Common myeloid progenitor, CD34-positive (primary cell): ENCODE measurements at regions of chr21 and their contacts with region 1.

Region 1: DNA sequence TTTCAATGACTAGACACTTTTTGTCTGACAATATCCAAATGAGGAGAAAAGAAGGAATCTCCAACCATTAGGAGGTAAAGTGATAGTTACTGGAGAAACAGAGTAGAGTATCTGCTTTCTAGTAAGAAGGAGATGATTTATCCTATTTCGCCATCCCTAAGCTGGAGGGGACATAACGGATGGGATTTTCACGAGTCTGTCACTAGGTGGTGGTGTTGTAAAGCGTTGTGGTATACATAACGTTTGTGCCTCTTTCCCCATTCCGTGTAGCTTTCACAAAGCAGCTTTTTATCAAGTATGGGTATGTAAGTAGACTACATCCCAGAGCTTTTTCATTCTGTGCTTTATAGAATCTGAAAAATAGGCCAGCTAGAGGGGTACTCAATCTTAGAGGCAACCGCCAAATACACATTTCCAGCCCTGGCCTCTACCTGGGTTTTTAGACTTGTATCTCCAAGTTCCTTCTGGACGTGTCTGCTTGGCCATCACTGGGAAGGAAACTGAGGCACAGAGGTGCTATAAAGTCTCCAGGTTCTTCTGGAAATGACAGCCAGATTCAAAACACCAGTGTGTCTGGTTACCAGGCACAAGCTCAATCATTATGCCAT is 33.3 kb upstream of the FAM3B start:
- DNase-seq: peak; percentile 81 to 90 (median 85)
- H3K4me3 ChIP-seq: no peak overlapping the region
- H3K27ac ChIP-seq: no peak overlapping the region
- H3K4me1 ChIP-seq: no peaks in the 10 kb centered on the region
- H3K27me3 ChIP-seq: peaks cover 3 to 14% (median 10%) of the 10 kb centered on the region in 5 experiments

Region 2: GRCh38 chr21:41269535-41269934 is 13.8 kb before region 1 on chr21:
- CTCF ChIA-PET with region 1: interaction called, 14 read pairs
- POLR2A ChIA-PET with region 1: no interaction called
- DNase-seq: no peak
- H3K4me3 ChIP-seq: no peak overlapping the region
- H3K27ac ChIP-seq: no peak overlapping the region
- H3K4me1 ChIP-seq: no peaks in the 10 kb centered on the region
- H3K27me3 ChIP-seq: no peaks in the 10 kb centered on the region

Region 3: GRCh38 chr21:41369105-41369919 is 86.0 kb after region 1 on chr21:
- CTCF ChIA-PET with region 1: interaction called, 16 read pairs
- POLR2A ChIA-PET with region 1: no interaction called
- DNase-seq: peak; percentile 51 to 70 (median 59)
- H3K4me3 ChIP-seq: peak overlapping the region in 6 of 7 experiments; percentile 9 to 80 (median 56)
- H3K27ac ChIP-seq: no peak overlapping the region
- H3K4me1 ChIP-seq: peaks cover 6 to 23% (median 10%) of the 10 kb centered on the region in 4 experiments
- H3K27me3 ChIP-seq: peaks cover 0 to 2% (median 0%) of the 10 kb centered on the region in 5 experiments

Region 4: DNA sequence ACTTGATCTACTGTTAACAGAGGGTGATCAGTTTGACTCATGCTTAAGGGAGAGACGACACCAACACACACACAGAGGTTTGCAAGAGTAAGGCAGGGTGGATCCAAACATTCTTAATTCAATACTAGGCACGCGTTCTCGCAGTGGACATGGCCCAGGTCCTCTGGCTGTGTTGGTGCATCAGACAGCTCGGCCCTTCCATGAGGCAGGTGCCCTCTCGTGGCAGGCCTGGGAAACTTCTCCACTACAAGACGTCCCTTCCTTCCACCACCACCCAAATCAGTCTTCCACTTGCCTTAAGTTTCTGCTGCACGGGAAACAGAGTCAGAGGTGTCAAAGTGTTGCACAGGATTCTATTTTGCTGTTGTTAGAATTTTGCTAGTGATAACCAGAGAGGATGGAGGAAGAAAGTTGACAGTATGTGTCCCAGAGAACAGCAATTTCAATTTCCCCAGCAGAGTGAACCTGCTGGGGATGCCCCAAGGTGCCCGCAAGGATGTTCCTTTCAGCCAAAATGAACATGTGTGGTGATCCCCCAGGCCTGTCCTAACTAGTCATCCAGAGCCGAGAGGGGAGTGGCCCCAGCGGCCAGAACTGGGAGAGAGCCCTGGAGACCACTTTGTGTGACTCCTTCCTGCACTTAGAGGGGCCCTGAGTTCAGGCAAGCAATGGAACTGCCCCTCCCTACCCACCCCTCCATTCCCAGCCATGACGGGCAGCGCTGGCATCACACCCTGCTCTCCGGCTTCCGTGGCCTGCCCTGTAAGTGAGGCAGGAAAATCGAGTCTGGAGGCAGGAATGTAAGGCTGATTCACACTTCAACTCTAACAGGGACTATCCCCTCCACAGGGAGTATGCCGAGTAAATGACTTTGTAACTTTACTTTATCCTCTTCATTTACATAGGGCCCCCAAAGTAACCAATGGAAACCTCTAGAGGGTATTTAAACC is 177.5 kb after region 1 on chr21:
- CTCF ChIA-PET with region 1: interaction called, 101 read pairs
- POLR2A ChIA-PET with region 1: interaction called, 4 read pairs
- DNase-seq: peak; percentile 57 to 75 (median 71)
- H3K4me3 ChIP-seq: no peak overlapping the region
- H3K27ac ChIP-seq: no peak overlapping the region
- H3K4me1 ChIP-seq: no peaks in the 10 kb centered on the region
- H3K27me3 ChIP-seq: no peaks in the 10 kb centered on the region

Region 5: DNA sequence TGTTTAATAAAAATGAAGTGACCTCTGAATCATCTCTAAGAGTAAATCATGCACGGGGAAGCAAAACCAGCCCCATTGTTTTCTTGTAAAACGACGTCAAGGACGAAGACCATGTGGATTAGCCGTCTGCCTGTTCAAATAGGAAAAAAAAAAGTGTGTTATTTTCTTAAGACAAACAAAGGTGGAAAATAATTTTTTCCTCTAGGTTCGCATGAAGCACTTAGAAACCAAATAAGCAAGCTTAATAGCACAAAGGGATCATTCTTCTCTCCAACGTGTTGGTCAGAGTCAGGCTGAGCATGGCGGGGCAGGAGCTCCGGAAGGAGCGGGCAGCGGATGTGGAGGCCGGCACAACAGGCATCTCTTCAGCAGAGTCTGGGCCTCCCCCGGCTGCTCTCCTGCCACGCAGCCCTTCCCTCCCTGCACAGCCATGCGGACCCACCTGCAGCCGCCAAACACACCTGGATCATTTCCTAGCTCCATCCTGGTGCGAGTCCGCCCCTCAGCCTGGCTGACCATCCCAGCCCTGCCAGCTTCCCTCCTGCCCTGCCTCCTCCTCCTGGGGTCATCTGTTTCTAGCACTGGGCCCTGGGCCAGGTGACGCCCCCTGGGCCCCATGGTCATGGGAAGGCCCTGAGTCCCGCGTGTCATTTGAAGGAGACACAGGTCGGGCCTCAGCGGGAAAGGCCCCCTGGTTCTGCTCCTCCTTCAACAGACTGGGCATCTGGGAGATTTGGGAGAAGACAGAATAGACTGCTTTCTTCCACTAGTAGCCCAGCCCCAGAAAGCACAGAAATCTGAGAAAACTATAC is 182.9 kb after region 1 on chr21:
- CTCF ChIA-PET with region 1: interaction called, 26 read pairs
- POLR2A ChIA-PET with region 1: no interaction called
- DNase-seq: no peak
- H3K4me3 ChIP-seq: no peak overlapping the region
- H3K27ac ChIP-seq: no peak overlapping the region
- H3K4me1 ChIP-seq: no peaks in the 10 kb centered on the region
- H3K27me3 ChIP-seq: peaks cover 0 to 10% (median 3%) of the 10 kb centered on the region in 5 experiments